Mammary epithelial cell (primary cell): ENCODE measurements at regions of chr12 and their contacts with region 1.

Region 1: DNA sequence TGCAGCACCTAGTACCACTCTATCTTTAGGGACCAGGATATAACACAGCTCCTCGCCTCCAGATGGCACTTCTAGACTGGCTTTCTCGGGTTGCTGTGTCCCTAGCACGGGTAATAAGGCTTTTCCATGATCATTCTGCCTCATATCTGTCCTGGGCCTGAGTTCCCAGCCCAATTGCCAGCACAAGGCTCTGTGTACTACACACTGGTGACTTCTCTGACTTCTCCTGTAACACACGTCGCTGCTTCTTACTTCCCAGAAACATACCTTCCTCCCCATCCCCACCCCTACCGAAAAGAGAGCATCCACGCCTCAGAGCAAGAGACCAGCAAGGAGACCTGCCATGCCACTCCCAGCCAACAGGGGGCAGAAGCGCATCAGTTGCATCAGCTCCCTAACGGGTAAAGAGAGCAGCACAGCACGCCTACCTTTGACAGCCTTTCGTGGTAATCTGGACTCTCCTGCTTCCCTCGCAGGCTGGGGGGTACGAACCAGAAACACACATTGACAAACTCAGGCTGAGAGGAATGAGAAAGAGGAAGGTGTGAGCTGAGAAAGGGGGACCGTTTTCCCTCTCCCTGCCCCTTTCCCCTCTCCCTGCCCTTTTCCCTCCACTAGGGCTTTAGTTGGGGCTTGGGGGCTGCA is 21.2 kb upstream of the ZNF740 start:
- DNase-seq: peak; percentile 63
- H3K4me3 ChIP-seq: no peak overlapping the region
- H3K27ac ChIP-seq: no peak overlapping the region
- H3K4me1 ChIP-seq: no peaks in the 10 kb centered on the region
- H3K27me3 ChIP-seq: no peaks in the 10 kb centered on the region
- CTCF ChIP-seq: peak; percentile 99

Region 2: DNA sequence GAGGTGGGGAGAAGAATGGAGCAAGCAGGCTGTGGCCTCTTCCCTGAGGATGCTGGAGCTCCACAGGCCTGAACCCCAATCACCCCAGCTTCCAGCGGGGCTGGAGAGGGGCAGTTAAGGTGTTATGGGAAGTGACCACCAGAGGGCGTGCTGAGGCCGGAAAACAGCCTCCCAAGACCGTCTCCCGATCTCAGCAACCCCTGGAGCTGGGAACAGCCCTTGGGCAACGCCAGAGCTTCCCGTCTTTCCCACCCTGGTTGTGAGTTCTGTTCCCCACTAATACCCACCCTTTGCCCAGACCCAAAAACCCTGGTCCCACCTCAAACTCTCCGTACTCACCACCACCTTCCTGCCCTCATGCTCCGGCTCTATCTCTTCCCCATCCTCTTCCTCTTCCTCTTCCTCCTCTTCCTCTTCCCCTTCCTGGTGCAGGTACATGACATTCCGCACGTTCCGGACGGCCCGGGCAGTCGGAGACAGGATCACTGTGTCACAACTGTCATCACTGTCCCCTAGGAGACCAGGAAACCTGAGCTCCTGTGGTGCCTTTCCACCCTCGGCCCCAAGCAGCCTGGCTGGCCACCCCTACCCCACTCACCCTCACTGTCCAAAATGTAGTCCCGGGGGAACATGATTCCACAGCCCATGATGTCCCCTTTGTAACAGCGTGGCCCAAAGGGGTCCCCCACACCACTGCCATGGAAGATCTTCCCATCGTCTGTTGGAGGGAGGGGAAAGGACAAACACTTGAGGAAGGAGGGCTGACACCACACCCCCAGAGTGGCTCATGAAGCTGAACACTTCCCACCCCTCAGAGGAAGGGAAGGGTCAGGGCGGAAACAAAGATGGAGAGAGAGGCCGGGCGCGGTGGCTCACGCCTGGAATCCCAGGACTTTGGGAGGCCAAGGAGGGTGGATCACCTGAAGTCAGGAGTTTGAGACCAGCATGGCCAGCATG is 93.1 kb before region 1 on chr12:
- CTCF ChIA-PET with region 1: no interaction called
- dilution Hi-C with region 1: no loop called
- in situ Hi-C with region 1: no loop called
- intact Hi-C with region 1: loop called (anchors 1 kb)
- DNase-seq: peak; percentile 55
- H3K4me3 ChIP-seq: no peak overlapping the region
- H3K27ac ChIP-seq: no peak overlapping the region
- H3K4me1 ChIP-seq: peaks cover 30% of the 10 kb centered on the region
- H3K27me3 ChIP-seq: no peaks in the 10 kb centered on the region
- CTCF ChIP-seq: peak; percentile 74 to 81

Region 3: DNA sequence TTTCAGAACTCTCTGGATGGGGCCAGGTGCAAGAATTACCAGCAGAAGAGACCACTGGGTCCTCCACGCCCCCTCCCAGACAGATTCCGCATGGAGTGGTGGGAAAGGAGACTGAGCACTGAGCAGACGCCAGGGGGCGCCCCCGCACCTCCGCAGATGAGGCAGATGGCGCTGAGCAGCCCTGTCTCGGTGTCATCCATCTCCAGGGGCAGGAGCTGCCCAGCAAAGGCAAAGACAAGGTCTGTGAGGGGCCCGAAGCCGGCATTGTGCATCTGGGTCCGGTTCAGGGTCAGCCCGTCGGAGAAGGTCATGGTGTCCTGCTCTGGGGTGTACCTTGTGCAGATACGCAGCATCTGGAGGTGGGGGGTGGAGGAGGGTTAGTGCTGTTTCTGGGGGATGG is 54.0 kb after region 1 on chr12:
- CTCF ChIA-PET with region 1: no interaction called
- dilution Hi-C with region 1: no loop called
- in situ Hi-C with region 1: no loop called
- intact Hi-C with region 1: loop called (anchors 1 kb)
- DNase-seq: no peak
- H3K4me3 ChIP-seq: no peak overlapping the region
- H3K27ac ChIP-seq: no peak overlapping the region
- H3K4me1 ChIP-seq: peaks cover 22% of the 10 kb centered on the region
- H3K27me3 ChIP-seq: no peaks in the 10 kb centered on the region
- CTCF ChIP-seq: peak; percentile 71 to 95

Region 4: GRCh38 chr12:53251477-53252348 is 92.4 kb after region 1 on chr12:
- CTCF ChIA-PET with region 1: no interaction called
- dilution Hi-C with region 1: no loop called
- in situ Hi-C with region 1: no loop called
- intact Hi-C with region 1: loop called (anchors 1 kb)
- DNase-seq: peak; percentile 72
- H3K4me3 ChIP-seq: peak overlapping the region; percentile 92 to 97 (median 96)
- H3K27ac ChIP-seq: peak overlapping the region; percentile 72
- H3K4me1 ChIP-seq: peaks cover 22% of the 10 kb centered on the region
- H3K27me3 ChIP-seq: no peaks in the 10 kb centered on the region
- CTCF ChIP-seq: peak; percentile 35 to 76

Region 5: DNA sequence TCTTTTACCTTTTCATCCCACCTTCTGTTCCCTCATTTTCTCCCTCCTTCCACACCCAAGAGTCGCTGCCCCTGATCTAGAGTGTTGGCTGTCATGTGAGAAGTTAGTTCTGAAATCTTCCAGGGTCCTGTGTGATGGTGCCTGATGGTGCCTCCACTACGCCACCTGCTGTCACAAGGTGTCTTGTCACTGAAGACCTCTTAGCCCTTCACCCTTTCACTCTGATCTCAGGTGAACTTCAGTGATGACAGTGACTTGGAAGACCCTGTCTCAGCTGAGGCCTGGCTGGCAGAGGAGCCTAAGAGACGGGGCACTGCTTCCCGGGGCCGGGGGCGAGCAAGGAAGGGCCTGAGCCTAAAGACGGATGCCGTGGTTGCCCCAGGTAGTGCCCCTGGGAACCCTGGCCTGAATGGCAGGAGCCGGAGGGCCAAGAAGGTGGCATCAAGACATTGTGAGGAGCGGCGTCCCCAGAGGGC is 128.5 kb after region 1 on chr12:
- CTCF ChIA-PET with region 1: interaction called, 3 read pairs
- dilution Hi-C with region 1: no loop called
- in situ Hi-C with region 1: no loop called
- intact Hi-C with region 1: loop called (anchors 1 kb)
- DNase-seq: peak; percentile 43
- H3K4me3 ChIP-seq: no peak overlapping the region
- H3K27ac ChIP-seq: no peak overlapping the region
- H3K4me1 ChIP-seq: no peaks in the 10 kb centered on the region
- H3K27me3 ChIP-seq: no peaks in the 10 kb centered on the region
- CTCF ChIP-seq: peak; percentile 51 to 80

Region 6: GRCh38 chr12:54028314-54029201 is 869.2 kb after region 1 on chr12 and contains the start of gene HOXC6:
- CTCF ChIA-PET with region 1: no interaction called
- dilution Hi-C with region 1: no loop called
- in situ Hi-C with region 1: no loop called
- intact Hi-C with region 1: no loop called
- DNase-seq: no peak
- H3K4me3 ChIP-seq: peak within 1 kb of the TSS; percentile 43 to 53 (median 46)
- H3K27ac ChIP-seq: peak within 1 kb of the TSS; percentile 6
- H3K4me1 ChIP-seq: peaks cover 43% of the 10 kb centered on the region
- H3K27me3 ChIP-seq: no peaks in the 10 kb centered on the region
- CTCF ChIP-seq: no peak
- total RNA-seq, gene HOXC6: 1.7 to 10.9 TPM